ENCODE measurements at regions of chr3 and their contacts with region 1.

Region 1: GRCh38 chr3:197511130-197511529 is 44.6 kb downstream of the BDH1 start:
- DNase-seq: no peak
- ATAC-seq: no peak
- H3K4me3 ChIP-seq: no peak overlapping the region
- H3K27ac ChIP-seq: no peak overlapping the region
- H3K4me1 ChIP-seq: peaks cover 0 to 10% (median 5%) of the 10 kb centered on the region in 12 donors
- H3K27me3 ChIP-seq: no peaks in the 10 kb centered on the region
- CTCF ChIP-seq: no peak
- POLR2A ChIP-seq: no peak

Region 2: GRCh38 chr3:197256836-197257444 is 254.2 kb before region 1 on chr3:
- intact Hi-C with region 1: loop called (anchors 1 to 5 kb)
- DNase-seq: peak in 1 of 5 donors; percentile 10
- ATAC-seq: no peak
- H3K4me3 ChIP-seq: no peak overlapping the region
- H3K27ac ChIP-seq: no peak overlapping the region
- H3K4me1 ChIP-seq: peaks cover 0 to 39% (median 20%) of the 10 kb centered on the region in 12 donors
- H3K27me3 ChIP-seq: no peaks in the 10 kb centered on the region
- CTCF ChIP-seq: peak; percentile 61 to 83 (median 74)
- POLR2A ChIP-seq: no peak

Region 3: DNA sequence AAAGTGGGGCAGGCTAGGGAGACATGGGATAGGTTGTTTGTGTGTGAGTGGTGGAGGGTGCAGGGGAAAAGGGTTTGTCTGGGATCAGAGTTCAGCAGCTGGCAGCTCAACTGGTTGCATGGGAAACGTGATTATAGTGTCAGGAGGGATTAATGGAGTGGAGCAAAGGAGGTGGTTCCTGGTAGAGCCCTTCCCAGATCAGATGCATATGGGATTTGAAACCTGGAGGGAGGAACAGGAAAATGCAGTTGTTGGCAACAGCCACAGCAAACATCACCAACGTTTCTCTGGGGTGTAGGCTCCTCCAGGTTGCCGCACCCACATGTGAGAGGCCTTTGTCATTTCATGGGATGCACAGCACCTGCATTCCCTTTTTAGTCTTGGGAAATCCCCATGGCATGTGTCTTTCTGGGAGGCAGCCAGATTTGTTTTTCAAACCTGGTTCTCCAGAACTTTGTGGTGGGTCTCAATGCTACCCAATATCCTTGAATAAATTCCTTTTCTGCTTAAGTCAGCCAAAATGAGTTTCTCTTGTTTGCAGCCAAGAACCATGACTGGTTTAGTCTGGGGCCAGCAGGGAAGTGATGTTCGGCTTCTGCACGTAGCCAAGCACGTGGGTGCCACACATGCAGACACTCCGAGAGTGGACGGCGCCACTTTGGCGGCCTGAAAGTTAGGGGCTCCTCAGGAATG is 16.6 kb before region 1 on chr3:
- intact Hi-C with region 1: no loop called
- DNase-seq: peak in 1 of 5 donors; percentile 53
- ATAC-seq: peak in 2 of 4 donors; percentile 57
- H3K4me3 ChIP-seq: no peak overlapping the region
- H3K27ac ChIP-seq: peak overlapping the region in 4 of 12 donors; percentile 9 to 59 (median 24)
- H3K4me1 ChIP-seq: peaks cover 0 to 24% (median 3%) of the 10 kb centered on the region in 12 donors
- H3K27me3 ChIP-seq: no peaks in the 10 kb centered on the region
- CTCF ChIP-seq: no peak
- POLR2A ChIP-seq: no peak